Activated CD4-positive, alpha-beta T cell treated with anti-CD3 and anti-CD28 coated beads, Interleukin-2, amount 10 ng/mL, durations not matched to agents 7 days and 5 days (primary cell): ENCODE measurements at regions of chr6 and their contacts with region 1.

Region 1: DNA sequence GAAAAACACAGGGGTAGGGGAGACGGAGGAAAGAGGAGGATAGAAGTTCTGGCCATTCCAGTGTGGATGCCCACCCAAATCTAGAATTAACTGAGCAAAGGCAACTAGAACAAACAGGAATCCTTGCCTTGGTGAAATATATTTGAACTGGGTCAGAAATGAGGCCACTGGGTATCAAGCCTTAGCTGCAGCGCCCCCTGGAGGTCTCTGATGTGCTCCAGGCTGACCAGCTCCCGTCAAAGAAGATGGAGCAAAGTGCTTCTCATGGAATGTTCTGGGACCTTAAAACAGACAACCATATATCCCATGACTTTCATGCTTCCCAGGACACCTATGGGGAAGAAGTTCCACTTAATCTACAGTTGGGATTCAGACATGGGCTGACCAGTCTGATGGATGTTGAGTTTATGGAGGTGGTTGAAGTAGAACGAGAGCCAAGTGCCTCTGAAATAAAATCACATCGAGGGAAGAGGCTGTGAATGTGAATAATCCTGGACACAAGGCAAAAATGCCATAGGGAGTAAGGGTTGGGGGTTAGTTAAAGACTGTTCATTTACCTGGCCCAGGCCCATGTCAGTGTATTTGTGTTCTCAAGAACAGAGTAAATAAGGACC is 50.4 kb downstream of the HLA-DPB1 start:
- DNase-seq: peak; percentile 62
- H3K4me3 Mint-ChIP-seq: no peak overlapping the region
- H3K27ac Mint-ChIP-seq: no peak overlapping the region
- H3K4me1 Mint-ChIP-seq: peaks cover 11% of the 10 kb centered on the region
- H3K27me3 Mint-ChIP-seq: peaks cover 3% of the 10 kb centered on the region

Region 2: DNA sequence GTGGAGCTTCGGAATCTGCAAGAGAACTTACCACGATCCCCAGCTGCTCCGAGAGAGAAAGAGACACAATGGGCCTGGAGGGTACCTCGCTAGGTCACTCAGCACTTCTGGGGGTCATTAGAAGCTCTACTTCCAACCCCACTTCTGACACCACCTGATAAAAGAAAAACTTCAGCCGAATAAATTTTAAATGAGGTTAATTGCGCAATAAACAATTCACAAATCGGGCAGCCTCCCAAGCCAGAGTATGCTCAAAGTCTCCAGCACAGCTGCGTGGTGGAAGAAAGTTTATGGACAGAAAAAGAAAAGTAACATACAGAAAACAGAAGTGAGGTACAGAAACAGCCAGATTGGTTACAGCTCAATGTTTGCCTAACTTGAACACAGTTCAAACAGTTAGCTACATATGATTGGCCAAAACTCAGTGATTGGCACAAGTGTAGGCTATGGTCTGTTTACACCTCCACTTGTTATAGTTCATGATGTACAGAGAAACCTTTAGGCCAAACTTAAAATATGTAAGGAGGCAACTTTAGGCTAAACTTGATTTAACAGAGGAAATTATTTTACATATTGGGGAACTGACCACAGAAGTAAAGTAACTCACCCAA is 13.5 kb after region 1 on chr6:
- CTCF ChIA-PET with region 1: interaction called, 12 read pairs
- POLR2A ChIA-PET with region 1: no interaction called
- DNase-seq: no peak
- H3K4me3 Mint-ChIP-seq: no peak overlapping the region
- H3K27ac Mint-ChIP-seq: no peak overlapping the region
- H3K4me1 Mint-ChIP-seq: peaks cover 2% of the 10 kb centered on the region
- H3K27me3 Mint-ChIP-seq: peaks cover 34% of the 10 kb centered on the region